Right lobe of liver (tissue), 6 donors: ENCODE measurements at regions of chr6 and their contacts with region 1.

Region 1: GRCh38 chr6:43355862-43356590 is 13.4 kb downstream of the ZNF318 start:
- DNase-seq: no peak
- ATAC-seq: peak; percentile 66 to 85 (median 74)
- H3K4me3 ChIP-seq: no peak overlapping the region
- H3K27ac ChIP-seq: no peak overlapping the region
- H3K4me1 ChIP-seq: peaks cover 0 to 5% (median 0%) of the 10 kb centered on the region in 4 donors
- H3K27me3 ChIP-seq: no peaks in the 10 kb centered on the region
- CTCF ChIP-seq: peak; percentile 40 to 60 (median 47)
- POLR2A ChIP-seq: no peak

Region 2: GRCh38 chr6:43263314-43264178 is 92.5 kb before region 1 on chr6:
- intact Hi-C with region 1: loop called in 1 of 2 experiments (anchors 10 kb)
- DNase-seq: peak; percentile 84 to 87 (median 87)
- ATAC-seq: peak; percentile 52 to 66 (median 57)
- H3K4me3 ChIP-seq: no peak overlapping the region
- H3K27ac ChIP-seq: no peak overlapping the region
- H3K4me1 ChIP-seq: peaks cover 0 to 34% (median 20%) of the 10 kb centered on the region in 4 donors
- H3K27me3 ChIP-seq: no peaks in the 10 kb centered on the region
- CTCF ChIP-seq: peak; percentile 84 to 91 (median 88)
- POLR2A ChIP-seq: no peak

Region 3: GRCh38 chr6:43723737-43724295 is 367.8 kb after region 1 on chr6:
- intact Hi-C with region 1: no loop called
- DNase-seq: peak; percentile 74 to 79 (median 78)
- ATAC-seq: peak; percentile 93 to 95 (median 94)
- H3K4me3 ChIP-seq: no peak overlapping the region
- H3K27ac ChIP-seq: no peak overlapping the region
- H3K4me1 ChIP-seq: no peaks in the 10 kb centered on the region
- H3K27me3 ChIP-seq: no peaks in the 10 kb centered on the region
- CTCF ChIP-seq: peak; percentile 63 to 81 (median 73)
- POLR2A ChIP-seq: no peak